ENCODE measurements at regions of chr1 and their contacts with region 1.

Region 1: GRCh38 chr1:204806943-204807687 is 63.5 kb upstream of the NFASC start:
- DNase-seq: peak; percentile 71 to 92
- H3K4me3 ChIP-seq: peak overlapping the region; percentile 36
- H3K4me1 ChIP-seq: 0 out of 2 replicates have a peak, but pooled peaks cover 2% of the 10 kb centered on the region
- H3K27me3 ChIP-seq: no peaks in the 10 kb centered on the region

Region 2: DNA sequence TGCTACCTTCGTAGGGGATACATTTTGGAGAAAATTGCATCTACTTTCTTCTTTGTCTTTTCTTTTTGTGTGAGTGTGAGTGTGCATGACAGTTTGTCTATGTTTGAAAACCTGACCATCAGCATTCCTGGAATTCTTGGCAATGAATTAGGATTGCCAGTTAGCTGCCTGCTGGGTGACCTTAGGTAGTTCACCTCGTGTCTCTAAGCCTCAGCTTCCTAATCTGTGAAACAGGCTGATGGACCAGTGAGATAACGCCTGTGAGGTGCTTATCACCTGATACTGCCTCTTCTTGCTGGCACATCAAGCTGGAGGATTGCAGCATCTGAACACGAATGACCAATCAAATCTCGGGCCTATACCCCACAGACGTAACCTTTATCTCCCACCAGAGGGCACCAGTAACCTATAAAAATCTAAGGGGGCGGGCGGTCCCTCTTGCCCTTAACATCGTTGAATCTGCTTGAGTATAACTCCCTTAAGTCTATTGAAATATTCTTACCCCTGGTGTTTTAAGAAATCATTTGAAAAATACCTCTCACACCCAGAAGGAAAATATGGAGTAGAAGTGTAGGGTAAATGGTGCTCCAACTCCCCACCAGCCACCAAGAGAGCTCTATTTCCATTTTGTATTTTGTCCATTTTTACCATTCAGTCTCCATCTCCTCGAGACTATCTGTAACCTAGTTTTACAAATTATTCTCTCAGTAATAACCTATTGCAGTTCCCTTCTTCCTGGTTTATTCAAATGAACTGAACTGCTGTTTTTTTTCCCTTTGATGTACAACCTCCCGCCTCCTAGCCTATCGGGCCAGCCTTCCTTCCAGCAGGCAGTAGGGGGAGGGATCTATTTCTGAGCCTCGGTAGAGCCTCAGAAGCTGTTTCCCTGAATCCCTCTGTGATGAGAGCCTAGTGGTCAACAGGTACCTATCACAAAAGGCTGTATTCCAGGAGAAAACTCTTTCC is 241.2 kb before region 1 on chr1:
- in situ Hi-C with region 1: loop called (anchors 5 kb)
- DNase-seq: peak; percentile 71 to 80
- H3K4me3 ChIP-seq: no peak overlapping the region
- H3K4me1 ChIP-seq: peaks cover 2% of the 10 kb centered on the region
- H3K27me3 ChIP-seq: no peaks in the 10 kb centered on the region

Region 3: GRCh38 chr1:204941421-204942338 is 134.6 kb after region 1 on chr1:
- in situ Hi-C with region 1: loop called (anchors 5 kb)
- DNase-seq: peak; percentile 41 to 82
- H3K4me3 ChIP-seq: no peak overlapping the region
- H3K4me1 ChIP-seq: no peaks in the 10 kb centered on the region; the same call in 1 of the 2 replicates
- H3K27me3 ChIP-seq: peaks cover 10% of the 10 kb centered on the region; the same call in 1 of the 2 replicates

Measured in HAP-1 (cell line).